ENCODE measurements at regions of chr17 and their contacts with region 1.

Region 1: DNA sequence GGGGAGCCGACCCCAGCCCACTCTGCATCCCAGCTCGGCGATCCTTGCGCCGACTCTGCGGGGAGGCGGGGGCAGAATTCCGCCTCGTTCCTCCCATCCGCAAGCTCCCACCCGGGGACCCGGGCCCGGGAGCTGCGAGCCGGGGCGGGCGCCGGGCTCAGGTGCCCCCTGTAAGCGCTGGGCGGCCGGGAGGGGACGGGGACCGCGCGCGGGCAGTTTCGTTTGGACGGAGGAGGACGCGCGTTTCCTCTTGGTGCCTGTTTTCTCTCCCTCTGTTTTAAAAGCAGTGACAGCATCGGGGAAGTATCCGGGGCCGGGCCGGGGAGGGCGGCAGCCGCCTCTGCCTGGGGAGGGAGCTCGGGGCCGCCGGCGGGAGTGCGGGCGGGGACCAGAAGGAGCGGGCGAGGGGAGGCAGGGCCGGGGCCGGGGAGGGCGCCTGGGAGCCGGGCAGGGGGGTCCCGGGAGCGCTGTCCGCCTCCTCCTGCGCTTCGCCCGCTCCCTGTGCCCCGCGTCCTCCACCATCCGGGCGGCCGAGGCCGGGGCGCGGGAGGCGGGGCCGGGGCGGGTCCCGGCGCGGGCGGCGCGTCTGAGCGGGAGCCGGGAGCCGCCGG is 57.0 kb downstream of the RAP1GAP2 start:
- H3K4me3 ChIP-seq: peak overlapping the region; percentile 46
- H3K27ac ChIP-seq: peak overlapping the region; percentile 53; the same call in 1 of the 2 replicates
- H3K4me1 ChIP-seq: no peaks in the 10 kb centered on the region
- CTCF ChIP-seq: no peak

Region 2: DNA sequence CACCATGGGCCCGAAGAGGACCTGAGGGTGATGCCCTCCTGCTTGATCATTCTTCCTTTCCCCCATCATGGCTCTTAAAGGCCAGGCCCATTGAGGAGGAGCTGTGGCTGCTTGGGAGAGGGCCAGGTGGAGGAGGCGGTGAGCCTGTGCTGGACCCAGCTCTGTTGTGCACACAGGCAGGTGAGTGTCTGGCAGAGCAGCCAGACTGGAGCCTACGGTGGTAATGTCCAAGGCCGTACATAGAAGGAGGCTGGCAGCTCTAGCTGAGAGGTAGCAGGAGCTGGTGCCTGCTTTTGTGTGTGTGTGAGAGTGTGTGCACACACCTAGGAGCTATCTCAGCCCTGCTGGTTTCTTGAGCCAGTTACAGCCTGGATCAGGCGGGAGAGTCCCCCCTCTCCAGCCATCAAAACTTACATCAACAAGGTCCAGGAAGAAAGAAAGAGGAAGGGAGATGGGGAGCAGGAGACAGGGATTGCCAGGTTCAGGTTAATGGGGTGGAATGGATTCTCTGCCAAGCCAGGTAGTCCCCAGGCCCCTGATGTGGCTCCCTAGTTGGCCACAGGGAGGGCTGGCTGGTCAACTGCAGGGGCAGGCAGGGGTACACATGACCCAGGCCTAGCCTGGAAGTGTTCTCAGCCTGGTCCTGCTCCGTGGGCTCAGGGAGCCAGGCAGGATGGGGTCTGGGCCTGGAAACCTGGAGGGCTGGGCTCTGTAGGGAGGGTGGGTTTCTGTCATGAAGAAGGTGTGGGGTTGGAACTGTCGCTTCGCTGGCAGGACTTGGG is 50.2 kb after region 1 on chr17:
- CTCF ChIA-PET with region 1: interaction called, 3 read pairs
- POLR2A ChIA-PET with region 1: interaction called, 10 read pairs
- H3K4me3 ChIP-seq: no peak overlapping the region
- H3K27ac ChIP-seq: no peak overlapping the region
- H3K4me1 ChIP-seq: no peaks in the 10 kb centered on the region
- CTCF ChIP-seq: no peak

Region 3: GRCh38 chr17:2929881-2930533 is 76.8 kb after region 1 on chr17:
- CTCF ChIA-PET with region 1: interaction called, 94 read pairs
- POLR2A ChIA-PET with region 1: interaction called, 6 read pairs
- H3K4me3 ChIP-seq: no peak overlapping the region
- H3K27ac ChIP-seq: no peak overlapping the region
- H3K4me1 ChIP-seq: no peaks in the 10 kb centered on the region
- CTCF ChIP-seq: no peak